ENCODE measurements at regions of chr2 and their contacts with region 1.

Region 1: DNA sequence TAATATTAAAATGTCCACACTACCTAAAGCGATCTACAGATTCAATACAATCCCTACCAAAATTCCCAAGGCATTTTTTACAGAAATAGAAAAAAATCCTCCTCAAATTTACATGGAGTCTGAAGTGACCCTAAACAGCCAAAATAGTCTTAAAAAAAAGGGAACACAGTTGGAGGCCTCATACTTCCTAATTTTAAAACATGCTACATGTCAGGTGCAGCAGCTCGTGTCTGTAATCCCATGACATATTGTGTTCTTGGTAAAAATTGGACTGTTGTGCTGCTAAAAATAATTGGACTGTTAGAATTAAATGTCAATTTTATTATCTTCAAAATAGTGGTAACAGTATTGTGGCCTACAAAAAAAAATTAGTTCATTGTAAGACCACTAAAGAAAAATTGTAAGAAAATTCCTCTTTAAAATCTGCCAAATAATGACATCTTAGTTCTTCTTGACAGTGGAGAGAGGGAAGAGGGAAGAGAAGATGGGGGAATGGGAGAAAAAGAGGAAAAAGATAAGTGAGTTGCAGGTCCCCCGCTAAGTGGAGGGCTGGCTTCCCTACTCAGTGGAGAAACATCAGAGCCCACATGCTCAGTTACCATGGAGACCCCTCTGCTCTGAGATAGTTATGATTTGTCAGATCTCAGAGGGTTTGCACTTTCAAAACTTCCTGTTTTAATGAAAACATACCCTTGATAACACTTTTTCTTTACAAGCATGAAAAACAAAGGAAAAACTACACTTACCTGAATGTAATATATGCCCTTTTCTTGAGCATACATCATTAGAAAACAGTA is 46.5 kb downstream of the UNC50 start:
- DNase-seq: no peak
- H3K4me3 ChIP-seq: no peak overlapping the region
- H3K27ac ChIP-seq: no peak overlapping the region
- H3K4me1 ChIP-seq: no peaks in the 10 kb centered on the region
- H3K27me3 ChIP-seq: no peaks in the 10 kb centered on the region
- CTCF ChIP-seq: no peak

Region 2: DNA sequence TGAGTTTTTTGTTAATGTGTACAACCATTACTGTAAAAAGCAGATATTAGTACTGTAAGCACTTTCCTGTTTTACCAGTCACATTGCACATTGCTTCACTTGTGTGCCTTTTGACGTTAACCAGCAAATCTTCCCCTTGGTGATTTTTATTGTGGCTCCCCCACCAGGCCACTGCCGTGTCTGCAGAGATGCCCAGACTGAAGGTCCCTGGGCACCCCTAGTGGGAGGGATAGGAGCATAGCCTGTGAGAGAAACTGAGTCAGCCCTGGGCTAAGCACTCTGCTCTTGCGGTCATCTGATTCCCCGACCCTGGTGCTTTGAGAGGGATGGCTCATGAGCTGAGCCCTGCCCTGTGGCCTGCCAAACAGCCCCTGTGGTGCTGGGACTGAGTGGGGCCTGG is 136.8 kb before region 1 on chr2:
- intact Hi-C with region 1: no loop called
- DNase-seq: peak; percentile 37
- H3K4me3 ChIP-seq: no peak overlapping the region
- H3K27ac ChIP-seq: no peak overlapping the region
- H3K4me1 ChIP-seq: no peaks in the 10 kb centered on the region
- H3K27me3 ChIP-seq: no peaks in the 10 kb centered on the region
- CTCF ChIP-seq: peak; percentile 47

Region 3: GRCh38 chr2:98727369-98728087 is 72.6 kb after region 1 on chr2:
- intact Hi-C with region 1: loop called (anchors 10 kb)
- DNase-seq: peak; percentile 51
- H3K4me3 ChIP-seq: no peak overlapping the region
- H3K27ac ChIP-seq: peak overlapping the region; percentile 65
- H3K4me1 ChIP-seq: peaks cover 6% of the 10 kb centered on the region
- H3K27me3 ChIP-seq: no peaks in the 10 kb centered on the region
- CTCF ChIP-seq: no peak